Activated CD4-positive, alpha-beta T cell treated with anti-CD3 and anti-CD28 coated beads for 36 hours (primary cell): ENCODE measurements at regions of chr1 and their contacts with region 1.

Region 1: DNA sequence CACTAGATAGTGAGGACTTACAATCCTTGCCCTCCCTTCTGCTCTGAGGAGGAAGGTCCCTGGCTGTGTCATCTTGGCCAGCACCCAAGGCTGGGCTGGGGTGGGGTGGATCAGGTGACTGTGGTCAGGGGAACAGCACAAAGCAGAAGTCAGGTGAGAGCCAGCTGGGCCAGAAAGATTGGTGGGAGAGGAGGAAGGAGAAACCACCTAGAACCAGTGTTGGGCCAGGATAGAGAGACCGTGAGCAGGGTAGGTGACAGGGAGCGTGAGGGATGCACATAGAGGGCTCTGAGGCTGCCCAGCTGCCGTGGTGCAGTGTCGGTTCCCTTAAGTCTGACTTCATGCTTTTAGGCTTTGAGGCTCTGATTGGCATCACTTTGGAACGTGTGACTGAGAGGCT is 22.7 kb downstream of the NCF2 start:
- DNase-seq: peak; percentile 47
- ATAC-seq: peak; percentile 43
- H3K4me3 Mint-ChIP-seq: no peak overlapping the region
- H3K27ac Mint-ChIP-seq: peak overlapping the region; percentile 29
- H3K4me1 Mint-ChIP-seq: peaks cover 23% of the 10 kb centered on the region
- H3K27me3 Mint-ChIP-seq: no peaks in the 10 kb centered on the region

Region 2: DNA sequence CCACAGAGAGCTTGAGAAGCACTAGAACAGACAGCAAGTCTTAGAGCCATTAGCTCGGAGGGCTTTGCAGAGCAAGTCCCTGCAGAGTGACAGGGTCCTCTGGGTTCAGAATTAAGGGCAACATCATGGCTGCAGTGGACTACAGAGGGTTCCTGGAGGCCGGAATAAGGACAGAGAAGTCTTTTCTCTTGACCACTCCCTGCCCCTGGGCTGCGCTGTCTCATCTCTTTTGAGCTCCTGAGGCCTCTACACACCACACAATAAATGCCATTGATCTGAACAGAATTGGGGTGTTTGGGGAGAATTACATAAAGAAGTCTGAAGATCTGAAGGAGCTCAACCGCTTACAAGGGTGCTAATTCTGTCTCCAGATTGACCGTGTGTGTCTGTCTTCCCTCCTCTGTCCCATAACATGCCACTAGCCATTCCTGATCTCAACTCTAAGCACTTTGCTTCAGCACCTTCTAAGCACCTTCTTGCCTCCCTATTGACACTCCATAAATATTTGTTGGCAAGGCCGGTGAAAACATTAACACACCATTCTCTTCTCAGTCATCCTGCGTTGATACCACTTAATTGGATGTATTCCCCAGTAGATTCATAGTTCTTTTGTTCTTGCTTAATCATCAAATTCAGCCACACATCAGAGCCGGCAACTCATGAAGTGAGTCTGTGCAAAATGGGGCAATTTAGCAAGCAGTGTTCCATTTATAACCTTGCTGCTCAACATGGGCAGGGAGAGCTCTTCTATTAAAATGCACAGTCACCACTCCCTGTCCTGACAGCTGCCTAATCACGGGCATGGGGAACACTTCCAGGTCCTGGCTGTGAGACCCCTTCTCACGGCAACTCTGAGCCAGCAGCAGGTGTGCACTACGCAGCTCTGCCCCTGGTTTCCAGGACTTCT is 199.1 kb before region 1 on chr1:
- CTCF ChIA-PET with region 1: no interaction called
- POLR2A ChIA-PET with region 1: no interaction called
- intact Hi-C with region 1: no loop called
- DNase-seq: no peak
- ATAC-seq: no peak
- H3K4me3 Mint-ChIP-seq: no peak overlapping the region
- H3K27ac Mint-ChIP-seq: no peak overlapping the region
- H3K4me1 Mint-ChIP-seq: no peaks in the 10 kb centered on the region
- H3K27me3 Mint-ChIP-seq: peaks cover 11% of the 10 kb centered on the region

Region 3: DNA sequence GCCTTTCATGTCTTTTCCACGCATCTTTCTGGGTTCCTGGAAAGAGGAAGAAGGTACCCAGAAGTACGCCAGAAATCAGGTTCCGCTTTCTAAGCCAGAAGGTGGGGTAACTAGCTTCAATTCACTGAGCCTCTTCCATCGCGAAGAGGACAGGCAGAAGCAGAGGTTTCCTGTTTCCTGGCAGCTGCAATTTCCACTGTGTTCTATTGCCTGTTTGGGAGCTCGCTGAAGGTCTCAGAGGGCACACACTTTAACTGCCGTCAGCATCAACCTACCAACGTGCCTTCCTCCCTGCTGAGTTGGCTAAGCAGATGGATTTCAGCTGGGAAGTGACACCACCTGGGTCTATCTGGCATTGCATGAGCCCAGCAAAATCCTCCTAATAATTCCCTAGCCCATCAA is 12.7 kb after region 1 on chr1:
- CTCF ChIA-PET with region 1: interaction called, 17 read pairs
- POLR2A ChIA-PET with region 1: no interaction called
- intact Hi-C with region 1: no loop called
- DNase-seq: peak; percentile 46
- ATAC-seq: peak; percentile 78
- H3K4me3 Mint-ChIP-seq: peak overlapping the region; percentile 23
- H3K27ac Mint-ChIP-seq: peak overlapping the region; percentile 47
- H3K4me1 Mint-ChIP-seq: peaks cover 8% of the 10 kb centered on the region
- H3K27me3 Mint-ChIP-seq: no peaks in the 10 kb centered on the region

Region 4: DNA sequence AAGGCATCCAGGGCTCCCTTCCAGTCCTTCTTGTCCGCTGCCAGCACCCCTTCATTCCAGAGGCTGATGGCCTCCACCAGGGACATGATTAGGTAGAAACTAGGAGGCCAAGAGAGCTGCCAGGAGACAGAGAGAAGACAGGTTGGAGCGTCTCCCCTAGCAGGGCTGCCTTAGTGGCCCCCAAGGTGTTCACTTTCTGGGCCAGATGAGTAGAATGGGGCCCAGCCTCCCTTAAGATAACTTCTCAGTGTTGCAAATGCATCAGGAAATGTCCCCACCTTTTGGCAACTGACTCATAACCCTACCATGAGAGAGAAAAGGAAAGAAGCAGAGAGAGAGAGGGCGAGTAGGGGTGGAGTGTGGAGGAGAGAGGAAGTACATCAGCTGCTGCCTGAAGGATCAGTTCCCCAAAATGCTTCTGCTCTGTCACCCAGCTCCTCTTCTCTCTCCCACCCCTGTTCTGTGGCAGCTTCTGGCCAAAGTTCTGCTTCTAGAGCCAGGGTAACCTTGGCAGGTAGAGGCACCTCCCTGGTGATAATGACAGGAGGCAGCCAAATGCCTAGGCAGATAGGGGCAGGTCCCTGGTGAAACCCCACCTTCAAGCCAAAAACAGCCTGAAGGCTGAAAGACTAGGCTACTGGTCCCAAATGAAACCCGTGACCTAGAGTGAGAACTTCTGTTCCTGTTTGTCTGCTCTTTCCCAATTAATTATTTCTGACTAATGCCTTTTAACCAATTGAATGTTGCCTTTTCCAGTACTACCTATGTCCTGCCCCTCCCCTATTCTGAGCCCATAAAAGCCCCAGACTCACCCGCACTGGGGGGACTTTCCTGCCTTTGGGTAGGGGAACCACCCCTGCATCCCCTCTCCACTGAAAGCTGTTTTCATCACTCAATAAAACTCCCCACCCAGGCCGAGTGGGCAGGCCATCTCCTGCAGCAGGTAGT is 22.9 kb after region 1 on chr1 and contains the start of gene NCF2:
- CTCF ChIA-PET with region 1: interaction called, 4 read pairs
- POLR2A ChIA-PET with region 1: no interaction called
- intact Hi-C with region 1: loop called in 1 of 2 experiments (anchors 1 kb)
- DNase-seq: peak; percentile 74
- ATAC-seq: peak; percentile 92
- H3K4me3 Mint-ChIP-seq: peak within 1 kb of the TSS; percentile 62
- H3K27ac Mint-ChIP-seq: peak within 1 kb of the TSS; percentile 89
- H3K4me1 Mint-ChIP-seq: peaks cover 47% of the 10 kb centered on the region
- H3K27me3 Mint-ChIP-seq: no peaks in the 10 kb centered on the region
- total RNA-seq, gene NCF2: 8.7 to 9.0 TPM

Region 5: DNA sequence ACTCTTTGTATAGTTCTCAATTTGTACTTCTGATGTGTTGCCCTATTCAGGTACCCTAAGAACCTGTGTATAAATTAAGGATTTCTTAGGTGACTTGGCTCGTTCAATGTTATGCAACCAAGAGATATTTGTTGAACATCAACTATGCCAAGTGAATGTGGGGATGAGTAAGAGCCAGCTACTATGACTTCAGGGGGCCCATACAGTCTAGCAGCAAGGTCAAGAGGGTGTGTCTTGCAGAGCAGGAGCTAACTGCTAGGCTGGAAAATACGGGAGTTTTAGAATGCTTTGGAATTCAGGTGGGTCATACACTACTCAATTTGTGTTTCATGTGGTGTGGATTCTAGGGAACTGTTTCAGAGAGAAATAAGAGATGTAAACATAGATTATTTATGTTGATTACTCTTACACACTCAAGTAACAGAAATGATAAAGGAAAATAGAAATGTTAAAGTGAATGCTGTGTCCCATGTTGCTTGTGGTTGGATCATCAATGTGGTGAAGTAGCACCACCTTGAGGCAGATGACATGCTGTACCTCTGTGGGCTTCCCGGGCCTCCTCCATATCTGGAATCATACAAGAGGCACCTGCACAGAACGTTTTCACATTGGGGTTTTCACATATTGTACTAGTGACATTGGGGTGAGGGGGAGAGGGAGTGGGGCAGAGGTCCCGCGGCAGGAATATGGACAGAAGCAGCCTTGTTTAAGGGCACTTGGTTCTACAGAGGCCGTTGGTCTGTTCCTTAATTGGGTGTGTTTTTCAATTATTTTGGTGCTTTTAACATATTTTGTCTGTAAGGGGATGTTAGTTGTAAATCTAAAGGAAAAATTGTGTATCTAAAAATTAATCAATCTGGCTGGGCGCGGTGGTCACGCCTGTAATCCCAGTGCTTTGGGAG is 55.6 kb after region 1 on chr1:
- CTCF ChIA-PET with region 1: interaction called, 3 read pairs
- POLR2A ChIA-PET with region 1: no interaction called
- intact Hi-C with region 1: loop called in 1 of 2 experiments (anchors 2 kb)
- DNase-seq: peak; percentile 71
- ATAC-seq: peak; percentile 97
- H3K4me3 Mint-ChIP-seq: no peak overlapping the region
- H3K27ac Mint-ChIP-seq: peak overlapping the region; percentile 22
- H3K4me1 Mint-ChIP-seq: peaks cover 17% of the 10 kb centered on the region
- H3K27me3 Mint-ChIP-seq: no peaks in the 10 kb centered on the region